ENCODE measurements at regions of chr11 and their contacts with region 1.

Region 1: DNA sequence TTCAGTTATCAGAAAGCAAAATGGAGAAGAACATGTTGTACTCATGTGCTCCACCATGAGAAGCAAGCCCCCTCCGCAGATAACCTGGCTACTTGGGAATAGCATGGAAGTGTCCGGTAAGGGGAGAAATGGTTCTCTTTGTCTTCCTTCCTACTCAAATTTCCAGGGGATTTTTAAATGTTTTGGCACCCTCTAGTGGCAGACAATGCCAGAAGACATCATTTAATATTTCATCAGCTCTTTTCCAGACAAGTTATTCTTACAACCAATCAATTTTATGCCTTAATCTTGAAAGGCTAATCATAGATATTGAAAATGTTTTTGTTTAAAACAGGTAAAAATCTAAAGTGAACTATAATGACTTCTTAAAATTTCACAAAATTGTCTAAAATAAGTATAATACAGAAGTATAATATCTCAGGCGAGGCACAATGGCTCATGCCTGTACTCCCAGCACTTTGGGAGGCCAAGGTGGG is 15.7 kb downstream of the CRTAM start:
- DNase-seq: peak; percentile 71 to 78 (median 74)
- H3K4me3 ChIP-seq: no peak overlapping the region
- H3K27ac ChIP-seq: no peak overlapping the region
- H3K4me1 ChIP-seq: peaks cover 7 to 36% (median 21%) of the 10 kb centered on the region in 4 experiments
- H3K27me3 ChIP-seq: no peaks in the 10 kb centered on the region

Region 2: DNA sequence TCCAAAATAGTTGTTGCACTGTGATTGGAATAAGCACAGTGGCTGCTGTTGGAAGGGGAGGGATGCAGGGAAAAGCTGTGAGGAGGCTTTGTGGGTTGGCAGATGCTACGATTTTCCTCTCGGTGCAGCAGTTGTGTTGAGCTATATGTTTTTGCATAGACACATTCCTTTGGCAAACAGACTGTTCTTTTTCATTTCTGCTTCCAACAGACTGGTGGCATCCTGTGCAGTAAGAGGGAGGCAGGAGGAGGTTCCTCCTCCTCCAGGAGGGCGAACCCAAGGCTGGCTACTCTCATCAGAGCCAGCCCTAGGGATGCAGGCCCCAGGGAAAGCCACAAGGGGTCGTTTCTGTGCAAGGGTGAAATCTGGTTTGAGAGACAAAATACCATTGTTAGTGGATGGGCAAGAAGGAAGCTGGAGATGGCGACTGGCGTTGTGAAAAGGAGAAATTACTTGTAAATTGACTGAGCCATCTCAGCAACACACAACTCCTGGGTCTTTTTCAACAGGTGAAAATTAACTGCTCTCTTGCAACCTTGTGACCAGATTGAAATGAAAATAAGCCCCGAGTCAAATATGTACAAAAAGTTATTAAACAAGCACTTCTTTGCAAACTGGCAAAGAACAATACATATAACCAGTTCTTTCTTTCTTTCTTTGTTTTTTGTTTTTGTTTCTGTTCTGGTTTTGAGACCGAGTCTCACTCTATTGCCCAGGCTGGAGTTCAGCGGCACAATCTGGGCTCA is 225.0 kb before region 1 on chr11:
- CTCF ChIA-PET with region 1: interaction called, 18 read pairs
- POLR2A ChIA-PET with region 1: no interaction called
- DNase-seq: peak; percentile 73 to 85 (median 81)
- H3K4me3 ChIP-seq: no peak overlapping the region
- H3K27ac ChIP-seq: no peak overlapping the region
- H3K4me1 ChIP-seq: peaks cover 0 to 18% (median 2%) of the 10 kb centered on the region in 4 experiments
- H3K27me3 ChIP-seq: no peaks in the 10 kb centered on the region

Region 3: DNA sequence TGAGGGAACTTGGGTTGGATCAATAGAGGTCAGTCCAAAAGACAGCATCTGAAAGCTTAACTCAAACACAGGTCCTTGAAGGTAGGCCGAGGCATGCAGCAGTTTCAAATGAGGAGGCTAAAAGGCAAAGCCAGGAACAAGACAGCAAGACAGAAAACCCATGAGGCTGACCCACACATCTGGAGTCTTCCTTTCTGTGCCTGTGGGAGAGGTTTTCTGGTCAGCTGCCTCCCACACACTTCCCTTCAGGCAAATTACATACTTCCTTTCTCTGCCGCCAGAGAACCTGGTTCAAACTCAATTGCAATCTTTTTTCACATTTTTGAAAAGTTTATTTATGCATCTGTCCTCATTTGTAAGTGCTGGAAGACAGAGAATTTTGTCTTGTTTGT is 45.5 kb before region 1 on chr11:
- CTCF ChIA-PET with region 1: interaction called, 178 read pairs
- POLR2A ChIA-PET with region 1: interaction called, 3 read pairs
- DNase-seq: peak in 2 of 3 donors; percentile 44 to 49
- H3K4me3 ChIP-seq: peak overlapping the region in 3 of 7 experiments; percentile 12 to 55 (median 47)
- H3K27ac ChIP-seq: peak overlapping the region; percentile 4 to 58
- H3K4me1 ChIP-seq: peaks cover 10 to 40% (median 21%) of the 10 kb centered on the region in 4 experiments
- H3K27me3 ChIP-seq: no peaks in the 10 kb centered on the region

Region 4: DNA sequence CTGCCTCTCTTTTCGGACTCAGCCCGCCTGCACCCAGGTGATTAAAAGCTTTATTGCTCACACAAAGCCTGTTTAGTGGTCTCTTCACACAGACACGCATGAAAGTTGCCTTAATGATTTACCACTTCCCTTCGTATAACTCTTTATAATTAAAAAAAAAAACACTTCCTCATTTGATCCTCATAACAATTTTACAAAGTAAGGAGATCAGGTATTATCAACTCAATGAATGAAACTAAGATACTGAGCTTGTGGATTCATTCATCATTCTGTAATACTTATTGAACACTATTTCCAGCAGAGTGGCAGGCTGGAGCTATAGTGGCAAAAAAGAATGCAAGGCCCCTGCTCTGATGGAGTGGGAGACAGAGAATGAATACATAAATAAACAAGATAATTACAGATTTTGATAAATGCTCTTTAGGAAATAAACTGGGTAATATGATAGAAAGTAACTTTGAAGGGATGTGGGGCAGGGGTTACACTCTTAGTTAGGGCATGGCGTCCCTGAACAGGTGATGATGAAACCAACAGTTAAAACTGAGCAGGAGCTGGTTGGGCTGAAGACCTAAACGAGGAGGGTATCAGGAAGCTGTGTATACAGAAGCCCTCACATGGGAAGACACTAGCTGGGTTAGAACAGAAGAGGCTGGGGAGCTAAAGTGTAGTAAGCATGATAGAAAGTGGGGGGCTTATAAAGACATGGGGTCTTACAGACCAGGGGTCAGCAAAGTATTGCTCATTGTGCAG is 21.1 kb before region 1 on chr11:
- CTCF ChIA-PET with region 1: interaction called, 45 read pairs
- POLR2A ChIA-PET with region 1: interaction called, 3 read pairs
- DNase-seq: peak; percentile 61 to 92 (median 86)
- H3K4me3 ChIP-seq: peak overlapping the region in 1 of 7 experiments; percentile 10
- H3K27ac ChIP-seq: no peak overlapping the region
- H3K4me1 ChIP-seq: peaks cover 3 to 31% (median 20%) of the 10 kb centered on the region in 4 experiments
- H3K27me3 ChIP-seq: no peaks in the 10 kb centered on the region

Region 5: GRCh38 chr11:122931510-122931909 is 77.5 kb after region 1 on chr11:
- CTCF ChIA-PET with region 1: no interaction called
- POLR2A ChIA-PET with region 1: no interaction called
- DNase-seq: no peak
- H3K4me3 ChIP-seq: no peak overlapping the region
- H3K27ac ChIP-seq: no peak overlapping the region
- H3K4me1 ChIP-seq: peaks cover 0 to 2% (median 0%) of the 10 kb centered on the region in 4 experiments
- H3K27me3 ChIP-seq: no peaks in the 10 kb centered on the region

Region 6: DNA sequence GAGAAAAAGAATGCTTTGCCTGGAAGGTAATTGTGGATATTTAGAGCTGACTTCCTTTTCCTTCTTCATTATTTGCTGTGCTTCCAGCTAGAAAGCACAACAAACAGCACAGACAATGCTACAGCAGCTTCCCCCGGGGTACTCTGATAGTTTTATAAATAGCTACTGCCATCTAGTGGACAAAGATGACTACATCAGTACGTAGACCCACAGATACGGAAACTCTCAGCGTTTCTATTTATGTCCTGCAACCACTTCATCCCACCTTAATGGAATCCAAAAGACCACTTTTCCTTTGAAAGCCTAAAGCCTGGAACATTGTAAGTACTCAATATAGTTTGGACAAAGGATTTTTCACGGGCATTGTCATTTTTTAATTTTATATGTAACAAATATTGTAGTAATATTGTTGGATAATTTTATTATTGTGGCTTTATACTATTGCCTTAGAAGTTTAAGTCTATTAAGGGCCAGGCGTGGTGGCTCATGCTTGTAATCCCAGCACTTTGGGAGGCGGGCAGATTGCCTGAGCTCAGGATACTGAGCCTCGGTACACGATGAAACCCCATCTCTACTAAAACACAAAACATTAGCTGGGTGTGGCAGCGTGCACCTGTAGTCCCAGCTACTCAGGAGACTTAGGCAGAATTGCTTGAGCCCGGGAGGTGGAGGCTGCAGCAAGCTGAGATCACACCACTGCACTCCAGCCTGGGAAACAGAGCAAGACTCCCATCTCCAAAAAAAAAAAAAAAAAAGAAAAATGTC is 200.5 kb after region 1 on chr11:
- CTCF ChIA-PET with region 1: interaction called, 15 read pairs
- POLR2A ChIA-PET with region 1: no interaction called
- DNase-seq: peak; percentile 67 to 82 (median 80)
- H3K4me3 ChIP-seq: no peak overlapping the region
- H3K27ac ChIP-seq: no peak overlapping the region
- H3K4me1 ChIP-seq: peaks cover 2 to 19% (median 14%) of the 10 kb centered on the region in 4 experiments
- H3K27me3 ChIP-seq: no peaks in the 10 kb centered on the region

Measured in common myeloid progenitor, CD34-positive (primary cell).